Activated T-helper 1 cell treated with anti-CD3 and anti-CD28 coated beads, Interleukin-12 subunit alpha, Interleukin-12 subunit beta, Interleukin-2, Interleukin-4 antibody, amounts not matched to agents 30 ng/mL and 10 ng/mL and 1 ng/mL, durations not matched to agents 14 hours and 24 hours and 36 hours (primary cell): ENCODE measurements at regions of chr3 and their contacts with region 1.

Region 1: DNA sequence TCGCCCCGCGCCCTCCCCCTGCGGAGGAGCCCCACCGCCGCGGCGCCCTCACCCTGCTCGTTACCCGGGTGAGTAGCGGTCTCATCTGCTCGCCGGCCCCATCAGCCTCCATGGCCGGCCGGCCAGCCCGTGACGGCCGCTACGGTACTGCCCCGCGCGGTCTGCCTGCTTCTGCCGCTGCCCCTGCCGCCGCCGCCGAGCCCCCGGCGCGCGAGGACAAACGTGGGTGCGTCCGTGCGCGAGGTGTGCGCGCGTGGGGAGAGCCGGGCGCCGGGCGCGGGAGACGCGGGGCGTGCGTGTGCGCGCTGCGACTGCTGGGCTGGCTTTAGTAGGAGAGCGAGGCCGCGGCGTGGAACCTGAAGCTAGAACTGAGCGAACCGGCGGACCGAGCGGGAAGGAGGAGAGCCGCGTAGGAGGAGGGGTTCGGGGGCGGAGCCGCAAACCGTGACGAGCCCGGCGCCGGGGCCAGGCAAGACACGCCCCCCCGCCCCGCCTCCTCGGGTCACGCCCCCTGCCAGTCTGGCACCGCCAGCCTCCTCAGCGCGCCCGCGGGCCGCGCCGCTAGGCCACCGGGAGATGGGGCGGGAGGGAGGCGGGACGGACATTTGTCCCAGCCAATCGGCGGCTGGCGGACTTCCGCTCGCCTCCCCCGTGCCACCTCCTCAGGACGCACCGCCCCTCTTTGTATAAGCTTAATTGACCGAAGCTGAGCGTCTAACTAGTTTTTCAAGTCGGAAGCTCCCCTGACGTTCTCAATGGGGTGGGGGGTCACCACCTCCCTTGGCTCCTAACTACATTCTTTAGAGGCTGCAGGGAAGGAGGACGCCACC is at the start of gene SLC4A7:
- DNase-seq: peak; percentile 96
- H3K4me3 Mint-ChIP-seq: peak within 1 kb of the TSS; percentile 100
- H3K27ac Mint-ChIP-seq: peak within 1 kb of the TSS; percentile 97
- H3K4me1 Mint-ChIP-seq: peaks cover 41% of the 10 kb centered on the region
- H3K27me3 Mint-ChIP-seq: no peaks in the 10 kb centered on the region
- total RNA-seq, gene SLC4A7: 65.5 and 66.7 TPM in 2 replicates

Region 2: GRCh38 chr3:27333843-27334242 is 150.4 kb before region 1 on chr3:
- intact Hi-C with region 1: no loop called
- DNase-seq: no peak
- H3K4me3 Mint-ChIP-seq: no peak overlapping the region
- H3K27ac Mint-ChIP-seq: no peak overlapping the region
- H3K4me1 Mint-ChIP-seq: no peaks in the 10 kb centered on the region
- H3K27me3 Mint-ChIP-seq: peaks cover 5% of the 10 kb centered on the region

Region 3: GRCh38 chr3:27368831-27369607 is 115.2 kb before region 1 on chr3 and contains the start of gene NEK10:
- intact Hi-C with region 1: loop called (anchors 1 kb)
- DNase-seq: peak; percentile 88
- H3K4me3 Mint-ChIP-seq: peak within 1 kb of the TSS; percentile 89
- H3K27ac Mint-ChIP-seq: peak within 1 kb of the TSS; percentile 52
- H3K4me1 Mint-ChIP-seq: peaks cover 16% of the 10 kb centered on the region
- H3K27me3 Mint-ChIP-seq: peaks cover 4% of the 10 kb centered on the region
- total RNA-seq, gene NEK10: 0.54 and 0.57 TPM in 2 replicates

Region 4: DNA sequence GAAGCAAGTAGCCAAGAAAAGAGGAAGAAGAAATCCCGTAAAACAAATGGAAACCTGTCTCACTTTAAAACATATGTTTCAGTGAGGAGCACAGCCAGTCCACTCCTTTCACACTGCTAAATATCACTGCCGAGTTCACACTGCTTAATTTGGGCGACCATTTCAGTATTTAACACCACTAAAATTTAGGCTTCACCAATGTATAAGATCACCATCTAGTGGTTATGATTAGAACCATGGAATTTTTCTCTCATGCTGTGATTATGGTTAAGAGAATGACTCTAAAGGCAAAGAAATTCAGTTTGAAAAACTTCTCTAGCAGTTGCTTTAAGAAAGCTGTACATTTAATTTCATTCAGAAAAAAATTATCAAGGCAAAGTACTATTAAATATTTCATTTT is 16.7 kb before region 1 on chr3:
- intact Hi-C with region 1: loop called (anchors 2 kb)
- DNase-seq: no peak
- H3K4me3 Mint-ChIP-seq: no peak overlapping the region
- H3K27ac Mint-ChIP-seq: no peak overlapping the region
- H3K4me1 Mint-ChIP-seq: peaks cover 8% of the 10 kb centered on the region
- H3K27me3 Mint-ChIP-seq: no peaks in the 10 kb centered on the region

Region 5: GRCh38 chr3:27590437-27591298 is 106.4 kb after region 1 on chr3:
- intact Hi-C with region 1: loop called (anchors 1 kb)
- DNase-seq: no peak
- H3K4me3 Mint-ChIP-seq: peak overlapping the region; percentile 31
- H3K27ac Mint-ChIP-seq: peak overlapping the region; percentile 76
- H3K4me1 Mint-ChIP-seq: peaks cover 28% of the 10 kb centered on the region
- H3K27me3 Mint-ChIP-seq: no peaks in the 10 kb centered on the region

Region 6: DNA sequence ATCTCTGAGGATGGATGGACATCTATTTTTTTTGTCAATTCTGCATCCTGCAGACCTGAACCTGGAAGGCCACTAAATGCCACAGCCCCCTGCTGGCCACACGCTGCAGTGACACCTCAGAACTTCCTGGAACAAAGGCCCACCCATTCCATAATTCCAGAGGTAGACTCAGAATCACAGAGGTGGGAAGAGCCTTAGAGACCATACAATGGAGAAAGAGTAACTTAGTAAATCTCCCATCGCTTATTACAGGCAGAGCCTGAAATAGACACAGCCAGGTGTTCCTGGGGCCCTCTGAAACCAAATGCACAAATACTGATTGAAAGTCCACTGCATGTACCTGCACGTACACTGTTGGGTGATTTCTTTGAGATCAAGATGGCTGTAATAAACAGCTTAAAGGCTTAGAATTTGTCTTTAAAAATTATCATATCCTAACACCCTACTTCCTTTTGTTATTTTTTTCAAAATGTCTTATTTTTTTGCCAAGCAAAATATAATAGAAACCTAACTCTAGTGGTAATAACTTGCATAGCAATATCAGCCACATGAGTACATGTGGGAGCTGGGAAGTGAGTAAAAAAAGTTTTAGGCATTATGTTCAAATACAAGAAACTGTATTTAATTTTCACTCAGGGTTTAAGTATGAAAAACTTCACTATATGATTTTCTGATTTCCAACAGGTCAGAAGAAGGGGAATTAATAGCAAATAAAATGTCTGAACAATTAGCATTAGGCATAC is 175.2 kb after region 1 on chr3:
- intact Hi-C with region 1: loop called (anchors 5 kb)
- DNase-seq: no peak
- H3K4me3 Mint-ChIP-seq: no peak overlapping the region
- H3K27ac Mint-ChIP-seq: no peak overlapping the region
- H3K4me1 Mint-ChIP-seq: peaks cover 7% of the 10 kb centered on the region
- H3K27me3 Mint-ChIP-seq: no peaks in the 10 kb centered on the region

Region 7: GRCh38 chr3:28241221-28242160 is 757.3 kb after region 1 on chr3 and contains the start of gene CMC1:
- intact Hi-C with region 1: loop called (anchors 1 kb)
- DNase-seq: peak; percentile 87
- H3K4me3 Mint-ChIP-seq: peak within 1 kb of the TSS; percentile 94
- H3K27ac Mint-ChIP-seq: peak within 1 kb of the TSS; percentile 96
- H3K4me1 Mint-ChIP-seq: peaks cover 37% of the 10 kb centered on the region
- H3K27me3 Mint-ChIP-seq: no peaks in the 10 kb centered on the region
- total RNA-seq, gene CMC1: 29.5 and 32.5 TPM in 2 replicates